Left cardiac atrium (tissue), 4 donors: ENCODE measurements at regions of chr19 and their contacts with region 1.

Region 1: GRCh38 chr19:43668406-43669158 is 1.4 kb downstream of the PLAUR start:
- DNase-seq: peak; percentile 99
- ATAC-seq: peak; percentile 89 to 92

Region 2: DNA sequence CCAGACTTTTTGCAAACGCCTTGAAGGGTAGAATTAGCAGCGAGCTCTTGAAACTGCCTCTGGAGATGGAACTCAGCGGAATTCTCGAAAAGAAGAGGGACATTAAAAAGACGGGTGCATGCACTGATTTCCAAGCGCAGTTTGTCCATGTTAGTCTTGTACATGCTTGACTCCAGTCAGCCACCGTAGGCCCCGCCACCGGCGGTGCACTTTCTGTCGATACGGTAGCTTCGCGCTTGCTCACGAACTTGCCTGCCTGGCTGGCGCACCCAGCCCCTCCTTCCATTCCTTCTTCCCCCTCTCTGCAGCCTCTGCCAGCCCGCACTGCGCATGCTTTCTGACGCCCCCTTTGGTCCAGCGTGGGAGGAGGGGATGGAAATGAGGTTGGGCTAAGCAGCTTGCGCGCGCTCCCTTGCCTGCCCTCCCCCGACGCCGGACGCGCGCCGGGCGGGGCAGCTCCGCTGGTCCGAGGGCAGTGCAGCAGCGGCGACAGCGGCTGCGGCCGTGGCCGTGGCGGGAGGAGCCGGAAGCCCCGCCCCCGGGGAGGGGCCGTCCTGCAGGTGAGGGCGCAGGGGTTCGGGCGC is 135.5 kb before region 1 on chr19 and contains the start of gene ZNF575:
- intact Hi-C with region 1: loop called in 1 of 2 experiments (anchors 5 kb)
- DNase-seq: peak; percentile 89
- ATAC-seq: peak; percentile 82 to 83
- total RNA-seq, gene ZNF575: 1.1 to 1.6 TPM

Region 3: DNA sequence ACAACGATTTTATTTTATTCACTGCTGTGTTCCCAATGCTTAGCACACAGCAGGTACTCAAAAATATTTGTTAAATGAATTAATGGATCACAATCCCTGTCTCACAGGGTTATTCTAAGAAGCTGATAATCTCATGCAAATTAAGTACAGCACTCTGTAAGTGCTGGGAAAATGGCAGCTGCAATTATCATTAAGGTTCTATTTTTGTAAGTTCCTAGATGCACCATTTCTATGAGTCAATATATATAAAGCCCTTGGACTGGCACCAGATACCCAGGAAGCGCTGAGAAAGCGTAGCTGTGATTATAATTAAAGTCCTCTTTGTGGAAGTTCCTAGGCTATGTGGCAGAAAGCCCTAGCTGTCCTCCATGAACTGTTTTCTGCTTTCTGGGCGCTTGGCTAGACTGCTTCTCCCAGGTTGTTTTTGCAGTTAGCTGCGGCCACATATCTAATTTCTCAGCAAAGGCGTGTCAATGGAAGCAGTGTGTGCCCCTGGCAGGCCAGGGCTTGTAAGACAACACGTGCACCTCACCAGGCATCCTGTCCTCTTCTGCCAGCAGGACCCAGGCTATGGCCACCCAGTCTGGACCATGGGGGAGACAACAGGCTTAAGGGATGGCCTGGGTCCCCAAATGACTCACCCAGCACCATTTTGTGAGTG is 61.9 kb before region 1 on chr19:
- intact Hi-C with region 1: no loop called
- DNase-seq: no peak
- ATAC-seq: no peak

Region 4: GRCh38 chr19:43735957-43736356 is 67.4 kb after region 1 on chr19:
- intact Hi-C with region 1: no loop called
- DNase-seq: no peak
- ATAC-seq: no peak